ENCODE measurements at regions of chr1 and their contacts with region 1.

Region 1: DNA sequence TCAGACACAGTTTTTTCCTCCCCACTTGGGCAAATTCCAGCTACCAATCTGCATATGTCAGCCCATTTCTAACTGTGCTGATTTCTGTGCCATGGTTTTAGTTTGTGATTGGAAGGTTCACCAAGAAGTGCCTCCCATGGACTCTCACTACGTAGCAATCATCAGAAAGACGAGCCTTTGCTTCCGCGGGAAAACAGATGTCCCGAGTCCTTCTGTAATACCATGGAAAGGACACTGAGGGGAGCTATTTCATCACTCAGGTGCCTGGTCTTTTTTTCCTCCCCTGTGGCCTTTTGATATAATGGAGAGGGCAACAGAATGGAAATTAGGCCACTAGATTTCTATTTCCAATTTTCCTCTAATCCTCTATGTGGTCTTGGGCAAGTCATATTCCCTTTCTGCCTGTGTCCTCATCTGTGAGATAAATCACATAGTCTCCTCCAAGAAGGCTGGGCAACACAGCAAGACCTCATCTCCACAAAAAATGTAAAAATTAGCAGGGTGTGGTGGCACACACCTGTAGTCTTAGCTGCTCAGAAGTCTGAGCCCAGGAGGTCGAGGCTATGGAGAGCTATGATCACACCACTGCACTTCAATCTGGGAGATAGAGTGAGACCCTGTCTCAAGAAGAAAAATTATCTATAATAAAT is 24.8 kb downstream of the LEMD1 start:
- DNase-seq: peak; percentile 29
- ATAC-seq: peak; percentile 88
- H3K4me3 Mint-ChIP-seq: no peak overlapping the region
- H3K27ac Mint-ChIP-seq: no peak overlapping the region
- H3K4me1 Mint-ChIP-seq: no peaks in the 10 kb centered on the region
- H3K27me3 Mint-ChIP-seq: peaks cover 4% of the 10 kb centered on the region
- CTCF ChIP-seq: peak; percentile 87

Region 2: DNA sequence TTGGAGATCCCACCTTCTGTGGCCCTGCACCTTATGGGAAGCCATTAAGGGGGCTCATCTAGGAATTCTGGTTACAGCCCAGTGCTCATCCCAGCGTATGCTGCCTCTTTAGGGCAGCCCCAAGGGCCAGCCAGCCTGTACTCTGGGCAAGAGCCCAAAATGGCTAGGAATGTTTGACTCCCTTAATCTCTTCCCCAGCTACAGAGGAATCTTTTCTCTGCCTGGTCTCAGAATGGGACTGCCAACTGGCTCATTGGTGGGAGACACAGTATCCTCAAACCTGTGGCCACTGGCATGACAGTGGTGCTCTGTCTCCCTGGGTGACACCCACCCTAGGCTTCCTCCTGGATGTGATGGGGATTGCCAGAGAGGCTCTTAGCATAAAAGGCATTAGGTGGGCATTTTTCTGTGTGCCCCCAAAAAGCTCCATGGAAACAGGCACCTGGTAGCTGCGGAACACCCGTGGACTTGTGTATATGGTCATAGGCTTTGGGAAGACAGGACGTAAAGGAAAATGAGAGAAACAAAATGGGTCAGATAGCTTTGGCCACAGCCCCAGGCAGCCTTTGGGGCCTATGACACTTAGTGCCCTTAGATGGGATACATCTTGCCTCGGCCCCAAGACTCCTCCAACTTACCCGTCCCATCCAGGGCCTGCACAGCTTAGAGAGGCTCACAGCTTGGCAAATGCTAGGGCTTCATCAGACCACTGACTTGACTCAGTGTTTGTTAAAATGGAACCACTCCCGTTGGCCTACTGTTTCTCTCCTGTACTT is 319.7 kb before region 1 on chr1:
- CTCF ChIA-PET with region 1: no interaction called
- POLR2A ChIA-PET with region 1: no interaction called
- intact Hi-C with region 1: no loop called
- DNase-seq: no peak
- ATAC-seq: no peak
- H3K4me3 Mint-ChIP-seq: no peak overlapping the region
- H3K27ac Mint-ChIP-seq: no peak overlapping the region
- H3K4me1 Mint-ChIP-seq: no peaks in the 10 kb centered on the region
- H3K27me3 Mint-ChIP-seq: no peaks in the 10 kb centered on the region
- CTCF ChIP-seq: no peak

Region 3: GRCh38 chr1:205371871-205372660 is 25.0 kb before region 1 on chr1:
- CTCF ChIA-PET with region 1: no interaction called
- POLR2A ChIA-PET with region 1: no interaction called
- intact Hi-C with region 1: no loop called
- DNase-seq: no peak
- ATAC-seq: no peak
- H3K4me3 Mint-ChIP-seq: no peak overlapping the region
- H3K27ac Mint-ChIP-seq: no peak overlapping the region
- H3K4me1 Mint-ChIP-seq: peaks cover 11% of the 10 kb centered on the region
- H3K27me3 Mint-ChIP-seq: peaks cover 6% of the 10 kb centered on the region
- CTCF ChIP-seq: no peak

Region 4: GRCh38 chr1:205382561-205382960 is 14.5 kb before region 1 on chr1:
- CTCF ChIA-PET with region 1: interaction called, 19 read pairs
- POLR2A ChIA-PET with region 1: no interaction called
- intact Hi-C with region 1: no loop called
- DNase-seq: no peak
- ATAC-seq: no peak
- H3K4me3 Mint-ChIP-seq: no peak overlapping the region
- H3K27ac Mint-ChIP-seq: no peak overlapping the region
- H3K4me1 Mint-ChIP-seq: no peaks in the 10 kb centered on the region
- H3K27me3 Mint-ChIP-seq: peaks cover 11% of the 10 kb centered on the region
- CTCF ChIP-seq: no peak

Region 5: GRCh38 chr1:205422993-205423625 is 26.0 kb after region 1 on chr1:
- CTCF ChIA-PET with region 1: interaction called, 27 read pairs
- POLR2A ChIA-PET with region 1: no interaction called
- intact Hi-C with region 1: no loop called
- DNase-seq: no peak
- ATAC-seq: no peak
- H3K4me3 Mint-ChIP-seq: no peak overlapping the region
- H3K27ac Mint-ChIP-seq: no peak overlapping the region
- H3K4me1 Mint-ChIP-seq: no peaks in the 10 kb centered on the region
- H3K27me3 Mint-ChIP-seq: peaks cover 22% of the 10 kb centered on the region
- CTCF ChIP-seq: no peak

Region 6: GRCh38 chr1:205477121-205477758 is 80.1 kb after region 1 on chr1:
- CTCF ChIA-PET with region 1: interaction called, 199 read pairs
- POLR2A ChIA-PET with region 1: no interaction called
- intact Hi-C with region 1: no loop called
- DNase-seq: no peak
- ATAC-seq: no peak
- H3K4me3 Mint-ChIP-seq: no peak overlapping the region
- H3K27ac Mint-ChIP-seq: no peak overlapping the region
- H3K4me1 Mint-ChIP-seq: peaks cover 34% of the 10 kb centered on the region
- H3K27me3 Mint-ChIP-seq: peaks cover 24% of the 10 kb centered on the region
- CTCF ChIP-seq: no peak

Region 7: DNA sequence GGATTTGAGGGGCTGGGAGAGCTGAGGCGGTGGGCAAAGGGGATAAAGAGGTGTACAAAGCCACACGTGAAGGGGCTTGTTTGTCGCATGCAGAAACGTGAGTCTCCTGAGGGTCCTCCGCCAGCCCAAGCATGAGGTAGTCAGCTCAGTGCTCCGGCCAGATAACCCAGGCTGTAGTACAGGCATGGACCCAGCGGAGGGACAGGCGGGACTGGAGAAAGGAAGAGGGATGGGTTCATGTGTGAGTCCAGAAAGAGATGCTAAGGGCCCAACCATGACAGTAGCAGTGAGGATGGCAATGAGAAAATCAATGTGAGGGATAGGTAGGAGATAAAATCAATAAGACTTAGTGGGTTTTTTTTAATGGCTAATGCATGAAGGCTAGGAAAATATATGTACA is 248.4 kb after region 1 on chr1:
- CTCF ChIA-PET with region 1: no interaction called
- POLR2A ChIA-PET with region 1: no interaction called
- intact Hi-C with region 1: loop called (anchors 10 kb)
- DNase-seq: no peak
- ATAC-seq: no peak
- H3K4me3 Mint-ChIP-seq: no peak overlapping the region
- H3K27ac Mint-ChIP-seq: no peak overlapping the region
- H3K4me1 Mint-ChIP-seq: no peaks in the 10 kb centered on the region
- H3K27me3 Mint-ChIP-seq: peaks cover 3% of the 10 kb centered on the region
- CTCF ChIP-seq: no peak